ENCODE measurements at regions of chr13 and their contacts with region 1.

Region 1: DNA sequence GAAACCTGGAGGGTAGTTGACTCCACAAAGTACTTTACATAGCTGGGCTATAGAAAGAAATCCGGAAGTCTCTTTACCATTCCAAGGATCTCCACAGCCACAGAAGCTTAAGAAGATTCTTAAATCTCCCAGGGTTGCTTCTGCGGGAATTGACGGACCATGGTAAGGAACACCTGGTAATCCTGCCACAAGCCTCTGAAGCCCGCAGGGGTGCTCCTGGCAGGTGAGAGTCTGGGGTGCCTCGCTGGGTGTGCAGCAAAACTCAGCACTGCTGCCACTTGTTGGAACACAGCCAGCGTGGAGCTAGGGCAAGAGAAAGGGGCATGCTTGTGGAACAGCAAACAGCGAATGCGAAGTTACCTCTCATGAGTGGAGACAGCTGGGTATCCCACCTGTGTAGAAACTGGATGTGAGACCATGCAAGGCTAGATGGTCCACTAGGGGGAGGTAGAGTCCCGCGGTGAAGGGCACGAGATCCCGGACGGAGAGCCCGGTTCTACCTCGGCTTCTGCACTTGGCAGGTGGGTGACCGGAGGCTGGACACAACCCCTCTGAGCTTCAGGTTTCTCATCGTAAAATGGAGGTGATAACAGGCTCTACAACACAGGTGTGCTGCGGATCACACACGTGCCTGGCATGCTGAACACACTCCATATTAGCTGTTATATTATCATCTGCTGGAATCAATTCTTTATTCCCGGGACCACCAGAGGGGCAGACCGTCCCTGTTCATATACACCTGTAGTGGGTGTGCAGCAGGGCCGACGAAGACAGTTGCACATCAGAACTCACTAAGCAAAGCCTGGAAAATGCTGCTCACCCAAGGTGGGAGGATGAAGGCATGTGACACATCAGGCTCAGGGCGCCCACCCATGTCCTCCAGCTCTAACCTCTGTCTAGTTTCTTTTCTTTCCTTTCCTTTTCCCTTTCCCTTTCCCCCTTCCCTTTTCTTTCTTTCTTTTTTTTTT is 24.1 kb upstream of the UBAC2 start:
- DNase-seq: peak; percentile 67 to 87
- ATAC-seq: peak; percentile 85
- H3K4me3 ChIP-seq: no peak overlapping the region
- H3K27ac ChIP-seq: no peak overlapping the region
- H3K4me1 ChIP-seq: no peaks in the 10 kb centered on the region
- H3K27me3 ChIP-seq: no peaks in the 10 kb centered on the region

Region 2: GRCh38 chr13:99436686-99437416 is 260.3 kb after region 1 on chr13:
- intact Hi-C with region 1: loop called (anchors 2 to 5 kb)
- DNase-seq: peak; percentile 91 to 95
- ATAC-seq: peak; percentile 85
- H3K4me3 ChIP-seq: no peak overlapping the region
- H3K27ac ChIP-seq: no peak overlapping the region
- H3K4me1 ChIP-seq: no peaks in the 10 kb centered on the region
- H3K27me3 ChIP-seq: no peaks in the 10 kb centered on the region